ENCODE measurements at regions of chr5 and their contacts with region 1.

Region 1: DNA sequence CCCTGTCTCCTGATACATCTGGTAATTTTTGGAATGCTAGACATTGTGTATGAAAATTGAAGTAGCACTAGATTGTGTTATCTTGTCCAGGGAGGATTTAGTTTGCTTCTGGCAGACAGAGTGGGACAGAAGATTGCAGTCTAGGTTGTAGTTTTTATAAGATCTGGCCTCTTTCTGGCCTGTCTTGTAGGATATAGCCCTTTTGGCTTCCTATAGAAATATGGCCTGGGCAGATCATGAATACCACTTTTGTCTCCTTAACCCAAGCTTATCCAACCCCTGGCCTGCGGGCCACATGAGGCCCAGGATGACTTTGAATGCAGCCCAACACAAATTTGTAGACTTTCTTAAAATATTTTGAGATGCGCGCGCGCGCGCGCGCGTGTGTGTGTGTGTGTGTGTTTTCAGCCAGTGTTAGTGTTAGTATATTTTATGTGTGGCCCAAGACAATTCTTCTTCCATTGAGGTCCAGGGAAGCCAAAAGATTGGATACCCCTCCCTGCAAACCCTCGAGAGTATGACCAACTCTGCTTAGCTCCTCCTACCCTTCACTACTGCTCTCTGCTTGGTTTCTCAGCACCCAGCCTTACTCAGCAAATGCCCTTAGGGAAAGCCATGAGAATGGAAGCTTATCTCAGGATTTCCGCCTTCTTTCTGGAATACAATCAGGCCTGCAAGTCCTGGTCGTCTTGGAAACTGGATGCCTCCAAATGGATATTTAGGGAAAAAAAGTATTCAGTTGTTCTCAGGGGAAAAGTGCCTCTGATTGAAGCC is 26.5 kb downstream of the ANKRD33B start:
- DNase-seq: peak; percentile 77
- H3K4me3 ChIP-seq: no peak overlapping the region
- H3K27ac ChIP-seq: no peak overlapping the region
- H3K4me1 ChIP-seq: peaks cover 11% of the 10 kb centered on the region
- H3K27me3 ChIP-seq: no peaks in the 10 kb centered on the region
- CTCF ChIP-seq: no peak

Region 2: DNA sequence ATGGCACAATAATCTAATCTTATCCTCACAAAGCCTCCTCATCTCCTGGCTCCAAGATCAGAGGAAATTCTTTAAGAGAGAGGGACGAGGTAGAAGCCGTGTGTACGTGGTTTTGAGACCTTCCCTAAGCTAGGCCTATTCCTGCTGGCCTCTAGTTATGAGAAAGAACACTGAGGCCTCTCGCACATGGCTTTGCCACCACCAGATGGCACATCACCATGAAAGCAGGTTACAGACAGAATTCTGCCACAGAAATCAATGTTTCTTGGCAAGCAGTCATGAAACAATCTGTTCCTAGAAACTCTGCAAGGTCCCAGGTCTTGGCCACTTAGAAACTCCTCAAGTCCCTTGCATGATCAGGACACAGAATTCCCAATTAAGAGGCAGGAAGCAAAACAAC is 692.1 kb before region 1 on chr5:
- CTCF ChIA-PET with region 1: no interaction called
- dilution Hi-C with region 1: no loop called
- in situ Hi-C with region 1: no loop called
- intact Hi-C with region 1: no loop called
- DNase-seq: peak; percentile 13
- H3K4me3 ChIP-seq: no peak overlapping the region
- H3K27ac ChIP-seq: no peak overlapping the region
- H3K4me1 ChIP-seq: no peaks in the 10 kb centered on the region
- H3K27me3 ChIP-seq: no peaks in the 10 kb centered on the region
- CTCF ChIP-seq: peak; percentile 49 to 74

Region 3: DNA sequence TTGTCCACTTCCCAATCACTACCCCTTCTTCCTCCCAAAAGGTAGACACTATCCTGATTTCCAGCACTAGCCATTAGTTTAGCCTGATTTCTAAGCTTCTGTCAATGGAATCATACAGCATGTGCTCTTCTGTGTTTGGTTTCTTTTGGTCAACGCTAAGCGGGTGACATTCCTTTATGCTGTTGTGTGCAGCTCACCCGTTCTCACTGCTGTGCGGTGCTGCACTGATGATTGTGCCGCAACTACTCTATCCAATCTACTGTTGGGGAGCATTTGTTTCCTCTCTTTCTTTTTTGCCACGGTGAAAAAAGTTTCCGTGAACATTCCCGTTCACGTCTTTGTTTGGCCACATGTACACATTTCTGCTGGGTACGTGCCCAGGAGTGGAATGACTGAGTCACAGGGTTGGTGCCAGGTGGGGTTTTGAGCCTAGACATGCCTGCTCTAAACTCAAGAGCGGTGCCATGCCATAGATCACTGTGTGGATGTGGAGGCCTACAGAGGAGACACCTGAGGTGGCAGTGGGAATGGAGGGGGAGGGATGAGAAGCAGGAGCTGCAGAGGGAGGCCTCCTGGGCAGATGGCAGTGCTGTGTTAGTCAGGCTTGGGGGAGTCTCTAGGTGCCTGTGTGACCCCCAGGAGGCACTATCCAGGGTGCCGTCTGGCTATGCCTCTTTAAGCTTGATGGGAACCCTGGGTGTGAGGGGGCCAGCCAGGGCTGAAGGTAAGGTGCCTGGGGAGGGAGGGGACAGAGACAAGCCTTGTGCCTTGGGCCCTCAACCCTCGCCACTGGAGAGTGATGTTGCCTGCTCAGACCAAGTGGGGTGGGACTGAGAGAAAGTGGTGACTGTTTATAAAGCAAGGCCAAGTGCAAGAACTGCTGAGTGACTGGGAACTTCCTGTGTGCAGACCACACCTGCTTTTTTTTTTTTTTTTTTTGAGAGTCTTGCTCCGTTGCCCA is 38.0 kb before region 1 on chr5:
- CTCF ChIA-PET with region 1: no interaction called
- dilution Hi-C with region 1: loop called (anchors 5 kb)
- in situ Hi-C with region 1: no loop called
- intact Hi-C with region 1: no loop called
- DNase-seq: no peak
- H3K4me3 ChIP-seq: no peak overlapping the region
- H3K27ac ChIP-seq: peak overlapping the region; percentile 47
- H3K4me1 ChIP-seq: peaks cover 35% of the 10 kb centered on the region
- H3K27me3 ChIP-seq: no peaks in the 10 kb centered on the region
- CTCF ChIP-seq: no peak

Region 4: DNA sequence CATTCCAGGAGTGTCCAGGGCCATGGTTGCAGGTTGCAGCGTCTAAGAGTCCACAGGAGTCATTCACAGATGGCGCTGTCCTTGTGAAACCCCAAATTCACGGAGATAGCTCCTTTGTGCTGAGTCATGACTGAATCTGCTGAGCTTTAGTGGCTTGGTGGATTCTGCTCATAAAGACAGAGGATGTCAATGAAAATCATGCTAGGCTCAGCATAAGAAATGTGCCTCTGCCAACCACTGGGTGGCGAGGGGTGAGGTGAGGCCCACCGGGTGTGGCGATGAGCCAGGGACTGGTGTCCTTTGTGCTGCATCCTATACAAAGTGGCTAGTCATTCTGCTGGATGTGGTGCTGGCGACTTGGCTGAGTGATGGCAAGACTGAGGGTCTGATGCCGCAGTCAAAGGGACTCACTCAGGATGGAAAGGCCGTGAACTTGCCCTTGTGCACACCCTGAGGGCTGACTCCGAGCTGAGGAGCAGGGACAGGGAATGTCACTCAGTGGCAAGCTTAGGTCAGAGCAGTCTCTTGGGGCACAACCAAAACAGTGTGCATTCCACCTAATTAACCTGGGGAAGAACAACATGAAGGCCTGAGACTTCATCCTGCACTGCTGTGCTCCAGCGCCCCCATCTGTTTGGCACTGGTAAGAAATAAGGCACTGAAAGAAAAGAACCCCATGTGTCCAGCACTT is 99.1 kb after region 1 on chr5:
- CTCF ChIA-PET with region 1: no interaction called
- dilution Hi-C with region 1: loop called (anchors 5 kb)
- in situ Hi-C with region 1: no loop called
- intact Hi-C with region 1: no loop called
- DNase-seq: no peak
- H3K4me3 ChIP-seq: no peak overlapping the region
- H3K27ac ChIP-seq: no peak overlapping the region
- H3K4me1 ChIP-seq: peaks cover 24% of the 10 kb centered on the region
- H3K27me3 ChIP-seq: no peaks in the 10 kb centered on the region
- CTCF ChIP-seq: peak; percentile 35 to 45

Region 5: DNA sequence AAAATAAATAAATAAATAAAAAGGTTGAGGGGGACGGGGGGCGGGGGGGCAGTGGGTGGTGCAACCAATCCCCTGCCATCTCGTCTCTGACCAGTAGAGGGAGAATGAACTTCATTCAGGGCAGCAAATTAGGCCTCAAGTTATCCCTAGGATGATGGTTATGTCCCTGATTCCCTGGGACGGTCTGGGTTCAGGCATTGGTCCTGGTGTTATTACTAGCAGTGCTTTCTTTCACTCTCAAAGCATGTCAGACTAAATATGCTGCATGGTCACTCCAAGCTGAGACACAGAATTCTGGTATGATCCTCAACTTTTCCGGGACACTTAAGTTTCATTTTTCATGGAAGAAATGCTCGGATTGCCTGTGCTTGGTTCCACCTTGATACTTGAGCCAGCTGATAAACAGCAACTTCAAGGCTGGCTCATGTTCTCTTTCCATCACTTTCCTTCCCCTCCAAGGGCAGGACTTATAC is 111.2 kb after region 1 on chr5:
- CTCF ChIA-PET with region 1: no interaction called
- dilution Hi-C with region 1: no loop called
- in situ Hi-C with region 1: no loop called
- intact Hi-C with region 1: no loop called
- DNase-seq: no peak
- H3K4me3 ChIP-seq: no peak overlapping the region
- H3K27ac ChIP-seq: peak overlapping the region; percentile 1
- H3K4me1 ChIP-seq: peaks cover 49% of the 10 kb centered on the region
- H3K27me3 ChIP-seq: no peaks in the 10 kb centered on the region
- CTCF ChIP-seq: peak; percentile 33 to 59